Ascending aorta (tissue), 2 donors: ENCODE measurements at regions of chr11 and their contacts with region 1.

Region 1: GRCh38 chr11:2930704-2931428 is 1.6 kb upstream of the PHLDA2 start:
- DNase-seq: peak in 1 of 2 donors; percentile 84
- H3K4me3 ChIP-seq: peak overlapping the region; percentile 75 to 90
- H3K27ac ChIP-seq: peak overlapping the region; percentile 76 to 82
- H3K4me1 ChIP-seq: peaks cover 6 to 30% of the 10 kb centered on the region in 2 donors
- H3K27me3 ChIP-seq: no peaks in the 10 kb centered on the region
- CTCF ChIP-seq: peak; percentile 26 to 78 (median 56)

Region 2: DNA sequence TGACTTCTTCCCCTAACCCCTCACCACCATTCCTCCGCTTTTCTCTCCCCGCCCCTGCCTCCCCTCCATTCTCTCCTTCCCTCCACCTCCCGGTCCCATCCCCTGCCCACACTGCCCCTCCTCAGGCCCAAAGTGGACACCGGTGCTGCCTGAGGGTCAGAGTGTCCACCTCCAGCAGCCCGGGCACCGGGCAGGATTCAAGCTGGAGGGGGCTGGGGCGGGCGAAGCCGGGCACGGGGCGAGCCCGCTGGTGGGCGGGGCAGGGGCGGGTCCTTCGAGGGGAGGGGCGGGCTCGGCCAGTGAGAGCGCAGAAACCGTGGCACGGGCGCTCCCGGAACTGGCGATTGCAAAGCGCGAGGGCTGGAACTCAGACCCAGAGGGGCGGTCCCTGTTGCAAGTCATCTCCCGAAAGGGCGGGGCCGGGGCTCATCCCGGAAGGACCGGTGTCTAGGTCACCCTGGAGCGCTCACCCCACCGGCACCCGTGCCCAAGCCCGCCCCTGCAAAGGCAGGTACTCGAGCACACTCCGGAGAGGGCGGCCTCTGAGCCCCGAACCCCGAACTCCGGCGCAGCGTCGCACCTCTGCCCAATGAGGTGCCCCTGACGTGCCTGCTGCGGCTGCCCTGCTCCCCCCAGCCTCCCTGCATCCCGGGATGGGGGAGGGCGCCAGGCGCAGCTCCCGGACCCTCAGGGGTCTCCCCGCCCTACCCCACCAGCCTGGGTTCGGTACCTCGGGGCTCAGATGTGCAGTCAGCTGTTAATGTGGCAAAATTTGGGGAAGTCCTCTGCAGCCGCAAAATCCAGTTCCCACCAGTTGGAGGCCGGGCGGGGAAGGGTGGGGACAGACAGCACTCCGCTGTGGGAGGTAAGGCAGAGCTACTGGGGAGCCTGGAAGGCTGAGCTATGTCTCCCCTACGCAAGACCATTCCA is 28.7 kb before region 1 on chr11:
- intact Hi-C with region 1: loop called (anchors 2 kb)
- DNase-seq: peak; percentile 85 to 97
- H3K4me3 ChIP-seq: peak overlapping the region; percentile 69 to 93
- H3K27ac ChIP-seq: peak overlapping the region; percentile 72 to 84
- H3K4me1 ChIP-seq: peaks cover 0 to 17% of the 10 kb centered on the region in 2 donors
- H3K27me3 ChIP-seq: no peaks in the 10 kb centered on the region
- CTCF ChIP-seq: no peak

Region 3: DNA sequence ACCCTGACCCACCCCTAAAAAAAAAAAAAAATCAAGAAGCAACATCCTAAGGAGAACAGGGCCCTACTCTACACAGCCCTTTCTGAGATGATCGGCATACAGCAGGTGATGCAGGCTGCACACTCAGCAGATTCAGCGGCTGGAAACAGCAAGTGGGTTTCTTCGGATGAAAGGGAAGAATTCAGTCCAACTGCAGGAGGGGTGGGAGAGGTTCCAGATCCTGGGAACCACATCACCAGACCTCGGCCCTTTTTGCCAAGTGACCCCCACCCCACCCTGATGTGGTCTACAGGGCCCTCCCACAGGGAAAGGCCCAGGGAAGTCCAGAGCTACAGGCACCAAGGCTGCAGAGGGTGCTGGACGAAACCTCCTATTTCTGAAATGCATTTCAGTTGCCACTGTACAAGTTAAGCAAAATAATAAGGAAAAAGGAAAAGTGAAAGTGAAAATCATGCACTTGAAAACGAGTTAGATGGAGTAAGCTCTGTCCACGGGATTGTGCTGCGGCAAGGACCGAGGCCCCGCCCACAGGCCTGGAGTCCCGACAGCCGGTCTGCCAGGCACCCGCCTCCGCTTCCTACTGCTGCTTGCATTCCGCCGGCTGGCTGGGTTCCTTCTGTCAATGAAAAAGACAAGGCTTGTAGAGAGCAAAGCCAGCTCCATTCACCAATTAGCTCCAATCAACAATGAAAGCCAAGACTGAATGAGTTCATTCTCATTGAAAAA is 14.3 kb after region 1 on chr11:
- intact Hi-C with region 1: loop called (anchors 2 kb)
- DNase-seq: peak; percentile 69 to 93
- H3K4me3 ChIP-seq: peak overlapping the region; percentile 33 to 59
- H3K27ac ChIP-seq: peak overlapping the region; percentile 69 to 81
- H3K4me1 ChIP-seq: peaks cover 7 to 17% of the 10 kb centered on the region in 2 donors
- H3K27me3 ChIP-seq: no peaks in the 10 kb centered on the region
- CTCF ChIP-seq: no peak

Region 4: GRCh38 chr11:2975594-2975993 is 44.7 kb after region 1 on chr11:
- intact Hi-C with region 1: no loop called
- DNase-seq: no peak
- H3K4me3 ChIP-seq: no peak overlapping the region
- H3K27ac ChIP-seq: no peak overlapping the region
- H3K4me1 ChIP-seq: no peaks in the 10 kb centered on the region
- H3K27me3 ChIP-seq: no peaks in the 10 kb centered on the region
- CTCF ChIP-seq: peak in 2 of 3 experiments; percentile 12 to 17